ENCODE measurements at regions of chr1 and their contacts with region 1.

Region 1: GRCh38 chr1:93629099-93630059 is 52.3 kb downstream of the BCAR3 start:
- DNase-seq: peak; percentile 69
- H3K4me3 Mint-ChIP-seq: no peak overlapping the region
- H3K27ac Mint-ChIP-seq: no peak overlapping the region
- H3K4me1 Mint-ChIP-seq: no peaks in the 10 kb centered on the region
- H3K27me3 Mint-ChIP-seq: no peaks in the 10 kb centered on the region

Region 2: DNA sequence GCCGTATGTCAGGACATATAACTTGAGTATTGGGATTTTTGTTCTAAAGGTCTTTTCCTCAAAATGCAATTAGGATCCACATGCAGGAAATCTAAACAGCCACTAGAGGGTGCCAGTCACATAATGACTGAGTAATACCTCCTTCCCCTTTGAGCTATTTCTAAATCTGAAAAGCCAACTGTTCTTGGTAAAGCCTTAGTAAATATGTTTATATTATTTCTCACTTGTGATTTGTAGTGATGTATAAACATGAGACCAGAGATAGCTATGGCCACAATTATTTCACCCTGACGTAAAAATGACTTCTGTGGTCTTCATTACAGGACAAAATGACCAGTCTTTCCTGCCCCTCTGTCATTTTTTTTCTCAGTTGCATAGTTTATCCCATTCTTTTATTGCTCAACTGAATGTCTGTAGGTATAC is 324.7 kb before region 1 on chr1:
- CTCF ChIA-PET with region 1: interaction called, 11 read pairs
- intact Hi-C with region 1: loop called (anchors 1 kb)
- DNase-seq: peak; percentile 67
- H3K4me3 Mint-ChIP-seq: no peak overlapping the region
- H3K27ac Mint-ChIP-seq: no peak overlapping the region
- H3K4me1 Mint-ChIP-seq: no peaks in the 10 kb centered on the region
- H3K27me3 Mint-ChIP-seq: no peaks in the 10 kb centered on the region

Region 3: GRCh38 chr1:93395195-93395594 is 234.2 kb before region 1 on chr1:
- CTCF ChIA-PET with region 1: no interaction called
- intact Hi-C with region 1: no loop called
- DNase-seq: no peak
- H3K4me3 Mint-ChIP-seq: no peak overlapping the region
- H3K27ac Mint-ChIP-seq: no peak overlapping the region
- H3K4me1 Mint-ChIP-seq: no peaks in the 10 kb centered on the region
- H3K27me3 Mint-ChIP-seq: no peaks in the 10 kb centered on the region

Region 4: DNA sequence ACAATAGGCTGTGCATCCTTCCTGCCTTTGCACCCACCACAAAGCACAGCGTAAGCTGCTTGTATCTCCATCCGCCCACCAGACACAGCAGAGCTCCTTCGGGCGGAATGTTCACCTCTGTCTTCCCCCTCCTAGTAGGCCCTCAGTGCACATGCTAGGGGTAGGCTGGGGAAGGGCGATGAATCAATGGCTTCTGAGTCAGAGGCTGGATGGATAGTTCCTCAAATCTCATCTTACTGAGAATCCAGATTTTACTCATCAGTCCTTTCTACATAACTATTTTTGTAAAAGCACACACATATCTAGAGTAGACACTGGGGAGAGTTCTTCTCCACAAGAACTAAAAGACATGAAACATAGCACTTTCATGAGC is 21.6 kb before region 1 on chr1:
- CTCF ChIA-PET with region 1: interaction called, 21 read pairs
- intact Hi-C with region 1: no loop called
- DNase-seq: peak; percentile 78
- H3K4me3 Mint-ChIP-seq: no peak overlapping the region
- H3K27ac Mint-ChIP-seq: no peak overlapping the region
- H3K4me1 Mint-ChIP-seq: peaks cover 25% of the 10 kb centered on the region
- H3K27me3 Mint-ChIP-seq: peaks cover 21% of the 10 kb centered on the region

Region 5: GRCh38 chr1:93814059-93814794 is 184.8 kb after region 1 on chr1:
- CTCF ChIA-PET with region 1: interaction called, 188 read pairs
- intact Hi-C with region 1: loop called (anchors 1 kb)
- DNase-seq: peak; percentile 74
- H3K4me3 Mint-ChIP-seq: no peak overlapping the region
- H3K27ac Mint-ChIP-seq: no peak overlapping the region
- H3K4me1 Mint-ChIP-seq: peaks cover 19% of the 10 kb centered on the region
- H3K27me3 Mint-ChIP-seq: no peaks in the 10 kb centered on the region

Region 6: DNA sequence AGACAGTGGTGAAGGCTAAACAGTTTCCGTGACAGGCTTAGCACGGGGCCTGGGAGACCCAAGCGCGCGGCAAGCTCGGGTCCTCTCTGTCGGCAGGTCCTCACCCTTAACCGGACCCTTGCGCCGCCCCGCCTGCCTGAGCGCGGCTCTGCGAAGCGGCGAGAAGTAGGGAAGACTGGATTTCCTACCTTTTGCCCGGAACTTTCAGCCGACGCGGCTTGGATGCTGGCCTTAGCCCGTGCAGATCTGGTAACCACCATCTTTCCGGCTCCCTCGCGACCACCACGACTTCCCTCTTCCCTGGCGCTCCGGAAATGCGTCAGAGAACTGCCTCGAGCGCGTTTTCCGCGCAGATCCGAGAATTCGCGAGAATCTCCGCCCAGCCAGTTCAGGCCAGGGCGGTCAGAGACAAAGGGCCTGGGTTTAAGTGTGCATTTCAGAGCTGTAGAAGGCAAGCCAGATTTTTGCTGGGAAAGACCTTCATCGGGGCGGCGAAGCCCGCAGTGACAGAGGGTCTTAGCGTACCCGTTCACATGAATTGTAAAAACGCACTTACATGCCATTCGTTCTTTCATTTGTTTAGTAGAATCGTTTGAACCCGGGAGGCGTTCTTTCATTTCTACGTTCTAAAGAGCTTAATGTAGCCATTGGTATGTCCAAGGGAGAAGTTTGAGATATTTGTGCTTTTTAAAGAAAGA is 249.7 kb after region 1 on chr1 and contains the start of gene DNTTIP2:
- CTCF ChIA-PET with region 1: no interaction called
- intact Hi-C with region 1: loop called (anchors 1 kb)
- DNase-seq: peak; percentile 95
- H3K4me3 Mint-ChIP-seq: peak within 1 kb of the TSS; percentile 92
- H3K27ac Mint-ChIP-seq: peak within 1 kb of the TSS; percentile 97
- H3K4me1 Mint-ChIP-seq: peaks cover 42% of the 10 kb centered on the region
- H3K27me3 Mint-ChIP-seq: no peaks in the 10 kb centered on the region
- total RNA-seq, gene DNTTIP2: 58.5 to 64.5 TPM